ENCODE measurements at regions of chr22 and their contacts with region 1.

Region 1: GRCh38 chr22:38705235-38706100 is at the start of gene GTPBP1:
- DNase-seq: peak; percentile 96 to 100 (median 100)
- H3K4me3 ChIP-seq: peak within 1 kb of the TSS; percentile 20 to 94
- H3K4me3 Mint-ChIP-seq: peak within 1 kb of the TSS; percentile 91 to 96 (median 94)
- H3K27ac ChIP-seq: peak within 1 kb of the TSS; percentile 94
- H3K27ac Mint-ChIP-seq: peak within 1 kb of the TSS; percentile 92 to 99 (median 98)
- H3K4me1 ChIP-seq: peaks cover 52% of the 10 kb centered on the region
- H3K4me1 Mint-ChIP-seq: peaks cover 48 to 69% (median 53%) of the 10 kb centered on the region in 4 donors
- H3K27me3 ChIP-seq: no peaks in the 10 kb centered on the region
- H3K27me3 Mint-ChIP-seq: peaks cover 0 to 4% of the 10 kb centered on the region in 2 donors
- total RNA-seq, gene GTPBP1: 94.1 to 96.6 TPM

Region 2: DNA sequence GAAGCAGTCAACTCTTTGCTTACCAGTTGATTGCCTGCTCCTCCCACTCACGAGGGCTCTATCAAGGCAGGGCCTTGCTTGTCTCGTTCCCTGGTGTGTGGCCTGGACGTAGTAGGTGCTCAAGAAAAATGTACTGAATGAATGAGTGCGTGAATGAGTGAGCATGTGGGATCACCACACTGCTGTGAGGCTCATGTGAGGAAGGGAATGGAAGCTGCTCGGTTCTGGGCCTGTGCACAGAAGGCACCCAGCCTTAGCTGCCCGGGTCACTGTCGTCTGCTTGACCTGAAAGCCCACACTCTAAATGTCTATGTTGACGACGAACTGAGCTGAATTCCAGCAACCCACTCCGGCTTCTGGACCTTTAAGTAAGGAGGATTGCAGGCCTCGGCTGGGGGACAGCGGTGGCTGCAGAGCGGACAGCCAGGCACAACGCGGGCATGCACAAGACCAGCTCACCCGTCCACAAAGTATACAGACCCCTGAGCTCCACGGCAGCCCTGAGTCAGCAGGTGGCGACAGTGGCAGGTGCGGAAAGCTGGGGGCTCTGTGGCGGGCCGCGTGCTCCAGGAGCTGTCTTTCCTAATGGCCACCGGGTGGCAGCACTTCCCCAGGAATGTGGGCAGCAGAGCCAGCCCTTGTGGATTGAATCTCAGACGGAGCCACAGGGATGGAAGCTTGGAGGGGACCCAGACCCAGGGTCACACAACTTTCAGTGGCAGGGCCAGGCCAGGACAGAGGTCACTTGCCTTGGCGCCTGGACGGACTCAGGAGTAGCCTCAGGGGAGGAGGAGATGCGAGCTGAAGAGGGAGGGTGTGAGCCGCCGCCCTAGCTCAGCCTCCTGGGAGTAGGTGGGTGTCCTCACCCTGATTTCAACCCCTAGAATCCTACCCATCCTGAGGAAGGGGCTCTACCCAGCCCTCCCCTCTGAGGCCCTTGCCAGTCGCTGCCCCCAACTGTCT is 653.3 kb before region 1 on chr22:
- CTCF ChIA-PET with region 1: no interaction called
- POLR2A ChIA-PET with region 1: no interaction called
- intact Hi-C with region 1: loop called (anchors 10 kb)
- DNase-seq: peak; percentile 68 to 73 (median 71)
- H3K4me3 ChIP-seq: no peak overlapping the region
- H3K4me3 Mint-ChIP-seq: no peak overlapping the region
- H3K27ac ChIP-seq: no peak overlapping the region
- H3K27ac Mint-ChIP-seq: peak overlapping the region in 4 of 7 donors; percentile 18 to 82 (median 64)
- H3K4me1 ChIP-seq: peaks cover 10% of the 10 kb centered on the region
- H3K4me1 Mint-ChIP-seq: peaks cover 3 to 18% (median 11%) of the 10 kb centered on the region in 4 donors
- H3K27me3 ChIP-seq: no peaks in the 10 kb centered on the region
- H3K27me3 Mint-ChIP-seq: peaks cover 0 to 3% of the 10 kb centered on the region in 2 donors

Region 3: GRCh38 chr22:38569972-38570778 is 135.3 kb before region 1 on chr22 and contains the start of gene DMC1:
- CTCF ChIA-PET with region 1: no interaction called
- POLR2A ChIA-PET with region 1: no interaction called
- intact Hi-C with region 1: loop called (anchors 2 kb)
- DNase-seq: peak; percentile 87 to 96 (median 90)
- H3K4me3 ChIP-seq: peak within 1 kb of the TSS; percentile 66 to 85
- H3K4me3 Mint-ChIP-seq: peak within 1 kb of the TSS; percentile 88 to 97 (median 92)
- H3K27ac ChIP-seq: peak within 1 kb of the TSS; percentile 76
- H3K27ac Mint-ChIP-seq: peak within 1 kb of the TSS; percentile 88 to 97 (median 96)
- H3K4me1 ChIP-seq: peaks cover 17% of the 10 kb centered on the region
- H3K4me1 Mint-ChIP-seq: peaks cover 12 to 24% (median 17%) of the 10 kb centered on the region in 4 donors
- H3K27me3 ChIP-seq: no peaks in the 10 kb centered on the region
- H3K27me3 Mint-ChIP-seq: no peaks in the 10 kb centered on the region
- total RNA-seq, gene DMC1: 0.29 to 1.1 TPM

Region 4: DNA sequence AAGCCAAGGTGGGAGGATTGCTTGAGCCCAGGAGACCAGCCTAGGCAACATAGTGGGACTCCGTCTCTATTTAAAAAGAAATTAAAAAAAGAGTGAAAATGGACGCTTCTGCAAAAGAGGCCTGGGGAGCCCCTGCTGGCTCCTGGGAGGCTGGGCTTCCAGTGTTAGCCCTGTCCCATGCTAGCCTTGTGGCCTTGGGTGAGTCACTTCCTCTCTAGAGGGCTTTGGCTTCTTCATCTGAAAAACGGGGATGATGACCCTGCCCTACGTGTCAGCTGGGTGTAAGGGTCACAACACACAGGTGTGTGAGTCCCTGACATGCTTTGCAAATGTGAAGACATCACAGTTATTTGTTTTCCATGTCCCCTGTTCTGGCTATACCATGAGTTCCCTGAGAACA is 82.1 kb before region 1 on chr22:
- CTCF ChIA-PET with region 1: no interaction called
- POLR2A ChIA-PET with region 1: no interaction called
- intact Hi-C with region 1: no loop called
- DNase-seq: no peak
- H3K4me3 ChIP-seq: no peak overlapping the region
- H3K4me3 Mint-ChIP-seq: no peak overlapping the region
- H3K27ac ChIP-seq: no peak overlapping the region
- H3K27ac Mint-ChIP-seq: no peak overlapping the region
- H3K4me1 ChIP-seq: no peaks in the 10 kb centered on the region
- H3K4me1 Mint-ChIP-seq: no peaks in the 10 kb centered on the region
- H3K27me3 ChIP-seq: no peaks in the 10 kb centered on the region
- H3K27me3 Mint-ChIP-seq: peaks cover 3 to 10% of the 10 kb centered on the region in 2 donors

Region 5: GRCh38 chr22:38681784-38682335 is 23.6 kb before region 1 on chr22 and contains the start of gene TOMM22:
- CTCF ChIA-PET with region 1: interaction called, 49 read pairs
- POLR2A ChIA-PET with region 1: interaction called, 36 read pairs
- intact Hi-C with region 1: loop called (anchors 1 kb)
- DNase-seq: peak; percentile 80 to 86 (median 82)
- H3K4me3 ChIP-seq: peak within 1 kb of the TSS; percentile 79 to 83
- H3K4me3 Mint-ChIP-seq: peak within 1 kb of the TSS; percentile 97 to 100 (median 99)
- H3K27ac ChIP-seq: peak within 1 kb of the TSS; percentile 92
- H3K27ac Mint-ChIP-seq: peak within 1 kb of the TSS; percentile 92 to 99 (median 99)
- H3K4me1 ChIP-seq: peaks cover 15% of the 10 kb centered on the region
- H3K4me1 Mint-ChIP-seq: peaks cover 8 to 29% (median 17%) of the 10 kb centered on the region in 4 donors
- H3K27me3 ChIP-seq: no peaks in the 10 kb centered on the region
- H3K27me3 Mint-ChIP-seq: peaks cover 0 to 1% of the 10 kb centered on the region in 2 donors
- total RNA-seq, gene TOMM22: 41.2 to 42.3 TPM

Region 6: DNA sequence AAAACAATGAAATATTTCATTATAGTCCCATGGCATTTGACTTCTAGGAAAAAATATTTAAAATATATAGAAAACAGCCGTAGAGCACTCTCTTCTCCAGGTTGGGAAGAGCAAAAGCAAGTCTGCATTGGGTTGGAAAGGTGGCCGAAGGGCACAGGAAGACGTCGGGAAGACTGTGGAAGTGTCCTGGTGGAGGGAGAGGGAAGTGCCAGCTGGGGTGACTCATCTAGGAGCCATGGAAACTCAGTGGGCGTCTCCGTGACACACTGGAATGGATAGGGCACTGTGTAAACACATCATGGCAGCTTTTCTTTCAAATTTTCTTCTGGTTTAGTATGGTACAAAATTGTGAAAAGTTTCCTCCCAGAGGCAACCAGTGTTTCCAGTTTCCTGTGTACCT is 12.9 kb after region 1 on chr22:
- CTCF ChIA-PET with region 1: interaction called, 3 read pairs
- POLR2A ChIA-PET with region 1: interaction called, 50 read pairs
- intact Hi-C with region 1: no loop called
- DNase-seq: peak in 1 of 5 donors; percentile 35
- H3K4me3 ChIP-seq: no peak overlapping the region
- H3K4me3 Mint-ChIP-seq: no peak overlapping the region
- H3K27ac ChIP-seq: no peak overlapping the region
- H3K27ac Mint-ChIP-seq: peak overlapping the region in 2 of 7 donors; percentile 36 to 46
- H3K4me1 ChIP-seq: peaks cover 17% of the 10 kb centered on the region
- H3K4me1 Mint-ChIP-seq: peaks cover 15 to 21% (median 18%) of the 10 kb centered on the region in 4 donors
- H3K27me3 ChIP-seq: no peaks in the 10 kb centered on the region
- H3K27me3 Mint-ChIP-seq: no peaks in the 10 kb centered on the region

Region 7: GRCh38 chr22:38733329-38733723 is 27.9 kb after region 1 on chr22:
- CTCF ChIA-PET with region 1: interaction called, 15 read pairs
- POLR2A ChIA-PET with region 1: interaction called, 153 read pairs
- intact Hi-C with region 1: no loop called
- DNase-seq: peak in 3 of 5 donors; percentile 41 to 51 (median 41)
- H3K4me3 ChIP-seq: no peak overlapping the region
- H3K4me3 Mint-ChIP-seq: peak overlapping the region in 2 of 8 donors; percentile 4 to 12
- H3K27ac ChIP-seq: peak overlapping the region; percentile 30
- H3K27ac Mint-ChIP-seq: peak overlapping the region; percentile 49 to 88 (median 84)
- H3K4me1 ChIP-seq: peaks cover 39% of the 10 kb centered on the region
- H3K4me1 Mint-ChIP-seq: peaks cover 18 to 60% (median 33%) of the 10 kb centered on the region in 4 donors
- H3K27me3 ChIP-seq: no peaks in the 10 kb centered on the region
- H3K27me3 Mint-ChIP-seq: no peaks in the 10 kb centered on the region

Region 8: DNA sequence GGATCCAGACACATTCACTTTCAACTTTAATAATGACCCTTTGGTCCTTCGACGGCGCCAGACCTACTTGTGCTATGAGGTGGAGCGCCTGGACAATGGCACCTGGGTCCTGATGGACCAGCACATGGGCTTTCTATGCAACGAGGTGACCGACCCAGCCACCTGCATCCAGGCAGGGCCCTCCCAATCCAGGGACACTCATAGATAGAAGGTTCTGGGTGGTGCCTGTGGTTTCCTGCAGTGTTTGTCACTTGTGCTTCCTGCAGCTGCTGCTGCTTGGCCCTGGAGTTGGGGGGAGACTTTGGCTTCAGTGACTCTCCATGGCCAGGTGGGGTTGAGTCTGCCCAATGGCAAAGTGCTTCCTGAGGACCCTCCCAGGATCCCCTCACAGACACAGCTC is 284.0 kb after region 1 on chr22:
- CTCF ChIA-PET with region 1: no interaction called
- POLR2A ChIA-PET with region 1: no interaction called
- intact Hi-C with region 1: loop called (anchors 5 kb)
- DNase-seq: peak in 3 of 5 donors; percentile 19 to 66 (median 25)
- H3K4me3 ChIP-seq: no peak overlapping the region
- H3K4me3 Mint-ChIP-seq: peak overlapping the region in 7 of 8 donors; percentile 43 to 88 (median 58)
- H3K27ac ChIP-seq: no peak overlapping the region
- H3K27ac Mint-ChIP-seq: peak overlapping the region in 6 of 7 donors; percentile 48 to 91 (median 74)
- H3K4me1 ChIP-seq: peaks cover 51% of the 10 kb centered on the region
- H3K4me1 Mint-ChIP-seq: peaks cover 28 to 70% (median 41%) of the 10 kb centered on the region in 4 donors
- H3K27me3 ChIP-seq: no peaks in the 10 kb centered on the region
- H3K27me3 Mint-ChIP-seq: peaks cover 0 to 2% of the 10 kb centered on the region in 2 donors

Measured in CD4-positive, alpha-beta memory T cell (primary cell).